ENCODE measurements at regions of chr1 and their contacts with region 1.

Region 1: DNA sequence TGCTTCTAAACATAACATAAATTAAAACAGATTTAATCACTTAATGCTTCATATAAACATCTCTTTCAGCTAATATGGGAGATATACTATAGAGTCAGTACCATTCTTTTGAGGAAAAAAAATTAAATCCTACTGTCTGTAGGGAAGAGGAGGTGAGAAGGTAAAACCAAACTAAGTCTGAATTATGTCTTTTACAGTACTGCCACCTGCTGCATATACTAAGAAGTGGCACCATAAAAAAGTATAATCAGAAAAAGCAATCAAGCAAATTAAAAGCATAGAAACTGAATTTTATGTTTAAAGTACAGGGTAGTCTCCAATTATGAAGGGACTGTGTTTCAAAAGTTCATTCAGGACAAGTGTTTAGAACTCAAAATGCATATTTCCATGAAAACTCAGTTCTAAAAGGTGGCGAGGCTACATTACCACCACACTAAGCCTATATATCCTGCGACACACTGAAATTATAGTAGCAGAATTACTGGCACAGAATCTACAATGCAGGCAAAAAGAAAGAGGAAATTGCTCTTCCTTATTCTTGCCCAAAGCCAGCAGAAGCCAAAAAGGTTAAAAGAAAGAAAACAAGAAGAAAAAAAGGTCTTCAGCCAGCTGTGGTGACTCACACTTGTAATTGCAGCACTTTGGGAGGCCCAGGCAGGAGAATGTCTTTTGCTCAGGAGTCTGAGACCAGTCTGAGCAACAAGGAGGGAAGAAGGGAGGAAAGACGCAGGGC is 9.0 kb downstream of the NSL1 start:
- DNase-seq: peak in 2 of 9 experiments; percentile 28 to 55
- ATAC-seq: peak; percentile 69
- H3K4me3 ChIP-seq: no peak overlapping the region
- H3K4me3 Mint-ChIP-seq: no peak overlapping the region
- H3K27ac ChIP-seq: no peak overlapping the region
- H3K27ac Mint-ChIP-seq: no peak overlapping the region
- H3K4me1 ChIP-seq: no peaks in the 10 kb centered on the region
- H3K4me1 Mint-ChIP-seq: peaks cover 7% of the 10 kb centered on the region
- H3K27me3 ChIP-seq: no peaks in the 10 kb centered on the region
- H3K27me3 Mint-ChIP-seq: no peaks in the 10 kb centered on the region
- CTCF ChIP-seq: peak; percentile 77

Region 2: GRCh38 chr1:211675230-211676105 is 1107.1 kb before region 1 on chr1 and contains the start of gene NEK2:
- CTCF ChIA-PET with region 1: no interaction called
- POLR2A ChIA-PET with region 1: no interaction called
- intact Hi-C with region 1: loop called in 1 of 2 experiments (anchors 5 kb)
- DNase-seq: peak; percentile 61 to 92 (median 84)
- ATAC-seq: peak; percentile 89
- H3K4me3 ChIP-seq: peak within 1 kb of the TSS; percentile 67 to 85
- H3K4me3 Mint-ChIP-seq: peak within 1 kb of the TSS; percentile 91
- H3K27ac ChIP-seq: peak within 1 kb of the TSS; percentile 18 to 22
- H3K27ac Mint-ChIP-seq: peak within 1 kb of the TSS; percentile 76
- H3K4me1 ChIP-seq: peaks cover 7% of the 10 kb centered on the region
- H3K4me1 Mint-ChIP-seq: peaks cover 14% of the 10 kb centered on the region
- H3K27me3 ChIP-seq: no peaks in the 10 kb centered on the region
- H3K27me3 Mint-ChIP-seq: no peaks in the 10 kb centered on the region
- CTCF ChIP-seq: no peak
- total RNA-seq, gene NEK2: 0.19 to 0.35 TPM

Region 3: DNA sequence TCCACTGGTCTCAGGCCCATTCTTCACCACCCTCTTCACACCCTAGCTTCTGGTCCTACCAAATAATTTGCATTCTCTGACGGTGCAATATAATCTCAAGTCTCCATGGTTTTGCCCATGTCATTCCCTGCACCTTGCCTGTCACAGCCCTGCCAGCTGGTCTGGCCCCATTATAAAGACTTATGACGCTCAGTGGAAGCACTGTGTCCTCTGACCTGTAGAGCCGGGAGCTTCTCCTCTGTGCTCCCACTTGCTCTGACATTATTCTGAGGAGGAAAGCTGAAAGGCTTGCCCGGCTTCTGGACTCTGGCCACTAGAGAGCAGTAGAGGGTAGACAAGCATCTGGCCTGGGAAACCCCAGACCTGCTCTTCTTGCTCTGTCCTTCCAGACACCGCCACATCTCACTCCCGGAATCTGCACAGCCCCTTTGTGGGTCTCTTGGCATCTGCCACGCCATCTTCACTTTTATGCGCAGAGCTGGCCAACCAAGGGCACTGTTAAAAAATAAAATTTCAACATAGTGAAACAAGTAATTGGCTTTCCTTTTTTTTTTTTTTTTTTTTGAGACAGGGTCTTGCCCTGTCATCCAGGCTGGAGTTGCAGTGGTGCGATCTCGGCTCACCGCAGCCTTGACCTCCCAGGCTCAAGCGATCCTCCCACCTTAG is 305.4 kb before region 1 on chr1:
- CTCF ChIA-PET with region 1: interaction called, 12 read pairs
- POLR2A ChIA-PET with region 1: no interaction called
- intact Hi-C with region 1: loop called (anchors 1 kb)
- DNase-seq: peak; percentile 50 to 87 (median 75)
- ATAC-seq: peak; percentile 96
- H3K4me3 ChIP-seq: no peak overlapping the region
- H3K4me3 Mint-ChIP-seq: peak overlapping the region; percentile 18
- H3K27ac ChIP-seq: no peak overlapping the region
- H3K27ac Mint-ChIP-seq: no peak overlapping the region
- H3K4me1 ChIP-seq: no peaks in the 10 kb centered on the region
- H3K4me1 Mint-ChIP-seq: peaks cover 12% of the 10 kb centered on the region
- H3K27me3 ChIP-seq: no peaks in the 10 kb centered on the region
- H3K27me3 Mint-ChIP-seq: peaks cover 4% of the 10 kb centered on the region
- CTCF ChIP-seq: peak; percentile 90

Region 4: GRCh38 chr1:212699104-212699624 is 83.4 kb before region 1 on chr1:
- CTCF ChIA-PET with region 1: interaction called, 4 read pairs
- POLR2A ChIA-PET with region 1: no interaction called
- intact Hi-C with region 1: loop called (anchors 2 kb)
- DNase-seq: peak in 7 of 9 experiments; percentile 13 to 73 (median 48)
- ATAC-seq: peak; percentile 55
- H3K4me3 ChIP-seq: peak overlapping the region; percentile 54
- H3K4me3 Mint-ChIP-seq: peak overlapping the region; percentile 88
- H3K27ac ChIP-seq: no peak overlapping the region
- H3K27ac Mint-ChIP-seq: peak overlapping the region; percentile 46
- H3K4me1 ChIP-seq: peaks cover 13% of the 10 kb centered on the region
- H3K4me1 Mint-ChIP-seq: peaks cover 34% of the 10 kb centered on the region
- H3K27me3 ChIP-seq: peaks cover 0 to 5% of the 10 kb centered on the region in 2 experiments
- H3K27me3 Mint-ChIP-seq: peaks cover 3% of the 10 kb centered on the region
- CTCF ChIP-seq: peak; percentile 48

Region 5: DNA sequence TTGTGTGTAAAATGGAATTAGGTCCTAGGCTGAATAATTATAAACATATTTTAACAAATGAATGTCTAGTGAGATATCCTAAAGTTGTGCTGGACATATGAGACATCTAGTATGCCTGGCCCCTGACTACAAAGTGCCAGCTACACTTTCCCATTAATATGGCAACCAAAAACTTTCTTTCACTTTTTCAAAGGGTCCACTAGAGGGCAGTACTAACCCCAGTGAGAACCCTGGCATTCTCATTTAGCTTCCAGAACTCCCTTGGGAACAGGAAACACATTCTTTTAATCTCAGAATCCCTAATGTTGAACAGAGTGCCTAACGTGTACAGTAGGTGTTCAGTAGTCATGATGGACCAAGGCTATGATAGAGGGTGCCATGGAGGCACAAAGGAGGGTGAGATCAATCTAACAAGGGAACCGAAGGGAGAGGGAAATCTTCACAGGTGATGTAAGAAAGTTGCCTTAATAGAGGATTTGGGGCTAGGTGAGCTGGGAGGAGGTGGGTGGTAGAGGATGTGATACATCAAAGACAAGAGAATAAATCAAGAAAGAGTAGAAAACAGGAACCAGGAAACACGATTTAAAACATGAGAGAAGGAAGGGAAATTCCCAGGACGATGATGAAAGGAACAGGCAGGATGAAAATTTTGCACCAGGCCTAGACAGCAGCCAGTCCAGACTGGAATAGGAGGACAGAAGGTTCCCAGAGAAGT is 32.6 kb before region 1 on chr1:
- CTCF ChIA-PET with region 1: interaction called, 5 read pairs
- POLR2A ChIA-PET with region 1: no interaction called
- intact Hi-C with region 1: loop called in 1 of 2 experiments (anchors 5 kb)
- DNase-seq: peak in 2 of 9 experiments; percentile 48 to 61
- ATAC-seq: peak; percentile 42
- H3K4me3 ChIP-seq: no peak overlapping the region
- H3K4me3 Mint-ChIP-seq: no peak overlapping the region
- H3K27ac ChIP-seq: peak overlapping the region in 1 of 2 experiments; percentile 32
- H3K27ac Mint-ChIP-seq: peak overlapping the region; percentile 58
- H3K4me1 ChIP-seq: peaks cover 42% of the 10 kb centered on the region
- H3K4me1 Mint-ChIP-seq: peaks cover 49% of the 10 kb centered on the region
- H3K27me3 ChIP-seq: no peaks in the 10 kb centered on the region
- H3K27me3 Mint-ChIP-seq: no peaks in the 10 kb centered on the region
- CTCF ChIP-seq: peak; percentile 75

Measured in CD8-positive, alpha-beta T cell (primary cell).